ENCODE measurements at regions of chr13 and their contacts with region 1.

Region 1: GRCh38 chr13:24995226-24995804 is 100.6 kb upstream of the PABPC3 start:
- DNase-seq: peak; percentile 65
- H3K4me3 Mint-ChIP-seq: no peak overlapping the region
- H3K27ac Mint-ChIP-seq: no peak overlapping the region
- H3K4me1 Mint-ChIP-seq: peaks cover 4% of the 10 kb centered on the region
- H3K27me3 Mint-ChIP-seq: peaks cover 32% of the 10 kb centered on the region

Region 2: DNA sequence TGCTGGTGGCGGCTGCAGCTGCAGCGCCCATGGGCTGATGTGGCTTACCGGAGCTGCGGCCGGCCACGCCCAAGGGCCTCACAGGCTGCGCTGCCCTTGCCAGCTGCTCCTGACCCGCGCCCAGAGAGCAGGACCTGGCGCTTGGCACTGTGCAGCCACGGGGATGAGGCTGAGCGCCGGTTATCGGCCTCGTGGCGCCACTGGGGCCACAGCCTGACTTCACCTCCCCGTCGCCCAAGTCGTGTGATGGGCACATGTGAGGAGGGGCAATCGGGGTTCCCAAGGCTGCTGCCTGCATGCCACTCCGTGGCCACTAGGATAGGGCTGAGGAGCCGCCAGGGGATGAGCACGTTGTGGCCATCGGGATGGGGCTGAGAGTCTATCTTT is 23.4 kb after region 1 on chr13:
- CTCF ChIA-PET with region 1: interaction called, 12 read pairs
- POLR2A ChIA-PET with region 1: no interaction called
- DNase-seq: no peak
- H3K4me3 Mint-ChIP-seq: peak overlapping the region; percentile 75
- H3K27ac Mint-ChIP-seq: no peak overlapping the region
- H3K4me1 Mint-ChIP-seq: peaks cover 13% of the 10 kb centered on the region
- H3K27me3 Mint-ChIP-seq: peaks cover 43% of the 10 kb centered on the region

Region 3: DNA sequence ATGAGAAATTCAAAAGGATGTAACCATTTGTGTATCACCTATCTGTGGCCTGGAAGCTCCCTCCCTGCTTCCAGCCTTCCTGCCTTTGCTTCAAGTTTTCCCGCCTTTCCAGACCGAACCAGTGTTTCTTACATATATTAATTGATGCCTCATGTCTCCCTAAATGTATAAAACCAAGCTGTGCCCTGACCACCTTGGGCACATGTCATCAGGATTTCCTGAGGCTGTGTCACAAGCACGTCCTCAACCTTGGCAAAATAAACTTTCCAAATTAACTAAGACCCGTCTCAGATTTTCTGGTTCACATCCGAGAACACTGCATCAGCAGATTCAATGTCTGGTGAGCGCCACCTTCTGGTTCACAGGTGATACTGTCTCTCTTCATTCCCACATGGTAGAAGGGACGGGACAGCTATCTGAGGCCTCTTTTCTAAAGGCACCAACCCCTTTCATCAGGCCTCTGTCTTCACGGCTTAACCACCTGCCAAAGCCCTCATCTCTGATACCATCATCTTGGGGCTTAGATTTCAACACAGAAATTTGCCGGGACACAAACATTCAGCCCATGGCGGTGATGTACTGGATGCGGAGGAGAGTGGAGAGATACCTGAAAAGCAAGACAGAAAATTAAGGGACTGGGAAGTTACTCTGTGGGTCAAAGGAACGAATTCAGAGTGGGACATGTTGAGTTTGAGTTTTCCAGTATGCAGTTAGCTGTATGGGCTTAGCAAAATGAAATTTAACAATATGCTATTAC is 41.9 kb after region 1 on chr13:
- CTCF ChIA-PET with region 1: interaction called, 15 read pairs
- POLR2A ChIA-PET with region 1: no interaction called
- DNase-seq: peak; percentile 59
- H3K4me3 Mint-ChIP-seq: no peak overlapping the region
- H3K27ac Mint-ChIP-seq: no peak overlapping the region
- H3K4me1 Mint-ChIP-seq: no peaks in the 10 kb centered on the region
- H3K27me3 Mint-ChIP-seq: peaks cover 41% of the 10 kb centered on the region

Region 4: DNA sequence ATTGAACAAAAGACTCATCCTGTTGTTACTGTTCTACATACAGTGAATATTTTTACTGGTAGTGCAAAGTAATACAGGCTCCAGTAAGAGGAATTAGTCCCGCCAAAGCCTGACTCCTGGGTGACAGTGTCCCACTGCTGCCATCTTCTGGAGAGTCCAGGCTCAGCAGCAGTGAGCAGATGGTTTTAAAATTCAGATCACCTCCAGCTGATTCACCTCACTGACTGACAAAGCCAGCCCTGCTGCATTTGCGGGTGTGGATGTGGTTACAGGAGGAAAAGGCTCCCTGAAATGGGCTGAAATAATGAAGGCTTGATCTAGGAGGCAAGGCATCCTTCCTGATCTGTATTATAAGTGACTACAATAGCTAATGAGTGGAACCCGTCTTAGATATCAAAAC is 118.9 kb after region 1 on chr13:
- CTCF ChIA-PET with region 1: interaction called, 29 read pairs
- POLR2A ChIA-PET with region 1: no interaction called
- DNase-seq: peak; percentile 69
- H3K4me3 Mint-ChIP-seq: no peak overlapping the region
- H3K27ac Mint-ChIP-seq: no peak overlapping the region
- H3K4me1 Mint-ChIP-seq: no peaks in the 10 kb centered on the region
- H3K27me3 Mint-ChIP-seq: peaks cover 31% of the 10 kb centered on the region

Region 5: GRCh38 chr13:25169951-25170547 is 174.7 kb after region 1 on chr13:
- CTCF ChIA-PET with region 1: no interaction called
- POLR2A ChIA-PET with region 1: no interaction called
- DNase-seq: no peak
- H3K4me3 Mint-ChIP-seq: no peak overlapping the region
- H3K27ac Mint-ChIP-seq: no peak overlapping the region
- H3K4me1 Mint-ChIP-seq: peaks cover 11% of the 10 kb centered on the region
- H3K27me3 Mint-ChIP-seq: peaks cover 62% of the 10 kb centered on the region

Region 6: GRCh38 chr13:25329706-25330105 is 334.4 kb after region 1 on chr13:
- CTCF ChIA-PET with region 1: no interaction called
- POLR2A ChIA-PET with region 1: no interaction called
- DNase-seq: no peak
- H3K4me3 Mint-ChIP-seq: no peak overlapping the region
- H3K27ac Mint-ChIP-seq: no peak overlapping the region
- H3K4me1 Mint-ChIP-seq: peaks cover 4% of the 10 kb centered on the region
- H3K27me3 Mint-ChIP-seq: no peaks in the 10 kb centered on the region